ENCODE measurements at regions of chr16 and their contacts with region 1.

Region 1: DNA sequence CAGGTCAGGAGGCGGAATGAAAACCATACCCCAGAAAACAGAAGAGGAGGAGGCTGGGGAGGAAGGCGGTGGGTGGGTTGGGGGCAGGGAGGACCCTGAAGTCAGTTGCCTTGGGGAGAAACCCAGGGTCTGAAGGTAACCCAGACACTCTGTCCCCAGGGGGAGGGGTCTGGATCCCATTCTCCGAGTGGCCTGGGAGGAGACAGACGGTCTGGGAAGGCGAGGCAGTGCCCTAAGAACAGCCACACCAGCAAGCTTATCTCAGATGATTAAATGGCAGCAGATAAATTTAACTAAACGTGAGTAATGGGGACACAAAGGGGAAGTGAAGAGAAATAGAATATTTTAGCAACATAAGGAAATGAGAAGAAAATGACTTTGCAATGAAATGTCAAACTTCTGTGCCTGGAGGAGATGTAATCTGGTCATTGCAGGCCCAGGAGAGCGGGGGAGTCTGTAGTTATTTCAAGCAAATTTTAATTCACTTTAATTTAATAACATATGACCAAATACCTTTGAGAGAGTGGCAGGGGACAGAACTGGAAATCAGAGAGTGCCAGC is 21.4 kb upstream of the ZFP90 start:
- DNase-seq: no peak
- ATAC-seq: no peak
- H3K4me3 ChIP-seq: no peak overlapping the region
- H3K27ac ChIP-seq: no peak overlapping the region
- H3K4me1 ChIP-seq: no peaks in the 10 kb centered on the region
- H3K27me3 ChIP-seq: no peaks in the 10 kb centered on the region

Region 2: DNA sequence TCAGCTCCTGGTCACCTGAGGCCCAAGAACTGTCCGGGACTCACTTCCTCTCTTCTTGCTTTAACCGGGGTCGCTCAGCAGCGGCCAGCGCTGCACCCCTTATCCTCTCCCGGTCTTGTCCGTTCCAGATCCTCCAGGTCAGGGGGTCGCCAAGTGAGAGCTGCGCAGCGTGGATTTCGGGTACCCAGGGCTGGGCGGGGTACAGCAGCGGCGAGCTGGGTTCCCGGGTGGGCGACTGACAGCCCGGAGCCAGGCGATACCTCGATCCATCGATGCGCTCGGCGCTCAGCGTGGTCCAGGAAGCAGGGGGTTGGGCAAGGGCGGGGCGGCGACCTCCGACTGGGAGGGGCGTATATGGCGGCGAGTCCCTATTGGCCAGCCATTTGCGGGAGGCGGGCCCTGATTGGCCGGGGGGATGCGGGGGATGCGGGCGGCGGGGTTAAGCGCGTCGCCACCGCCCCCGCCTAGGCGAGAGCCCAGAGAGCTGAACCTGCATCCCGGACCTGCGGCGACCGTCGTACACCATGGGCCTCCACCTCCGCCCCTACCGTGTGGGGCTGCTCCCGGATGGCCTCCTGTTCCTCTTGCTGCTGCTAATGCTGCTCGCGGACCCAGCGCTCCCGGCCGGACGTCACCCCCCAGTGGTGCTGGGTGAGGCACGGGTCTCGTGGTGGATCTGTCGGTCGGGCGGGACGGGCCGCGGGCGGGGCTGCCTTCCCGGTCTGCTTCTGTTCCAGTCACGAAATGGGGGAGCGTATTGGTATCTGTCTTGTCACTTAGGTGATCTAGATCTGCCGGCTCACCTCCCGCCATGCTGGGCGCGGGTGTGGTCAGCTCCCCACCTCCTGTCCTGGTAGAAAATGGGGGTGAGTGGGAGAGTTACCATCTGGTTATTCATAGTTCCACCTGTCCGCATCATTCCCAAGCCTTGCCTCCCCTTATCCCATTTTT is 272.5 kb before region 1 on chr16 and contains the start of gene PLA2G15:
- intact Hi-C with region 1: loop called in 1 of 4 experiments (anchors 10 kb)
- DNase-seq: peak; percentile 97 to 99 (median 99)
- ATAC-seq: peak; percentile 97
- H3K4me3 ChIP-seq: peak within 1 kb of the TSS; percentile 68
- H3K27ac ChIP-seq: peak within 1 kb of the TSS; percentile 67
- H3K4me1 ChIP-seq: peaks cover 19% of the 10 kb centered on the region
- H3K27me3 ChIP-seq: no peaks in the 10 kb centered on the region
- total RNA-seq, gene PLA2G15: 20.2 to 30.8 (median 28.7) TPM